CD8-positive, alpha-beta memory T cell (primary cell): ENCODE measurements at regions of chr11 and their contacts with region 1.

Region 1: DNA sequence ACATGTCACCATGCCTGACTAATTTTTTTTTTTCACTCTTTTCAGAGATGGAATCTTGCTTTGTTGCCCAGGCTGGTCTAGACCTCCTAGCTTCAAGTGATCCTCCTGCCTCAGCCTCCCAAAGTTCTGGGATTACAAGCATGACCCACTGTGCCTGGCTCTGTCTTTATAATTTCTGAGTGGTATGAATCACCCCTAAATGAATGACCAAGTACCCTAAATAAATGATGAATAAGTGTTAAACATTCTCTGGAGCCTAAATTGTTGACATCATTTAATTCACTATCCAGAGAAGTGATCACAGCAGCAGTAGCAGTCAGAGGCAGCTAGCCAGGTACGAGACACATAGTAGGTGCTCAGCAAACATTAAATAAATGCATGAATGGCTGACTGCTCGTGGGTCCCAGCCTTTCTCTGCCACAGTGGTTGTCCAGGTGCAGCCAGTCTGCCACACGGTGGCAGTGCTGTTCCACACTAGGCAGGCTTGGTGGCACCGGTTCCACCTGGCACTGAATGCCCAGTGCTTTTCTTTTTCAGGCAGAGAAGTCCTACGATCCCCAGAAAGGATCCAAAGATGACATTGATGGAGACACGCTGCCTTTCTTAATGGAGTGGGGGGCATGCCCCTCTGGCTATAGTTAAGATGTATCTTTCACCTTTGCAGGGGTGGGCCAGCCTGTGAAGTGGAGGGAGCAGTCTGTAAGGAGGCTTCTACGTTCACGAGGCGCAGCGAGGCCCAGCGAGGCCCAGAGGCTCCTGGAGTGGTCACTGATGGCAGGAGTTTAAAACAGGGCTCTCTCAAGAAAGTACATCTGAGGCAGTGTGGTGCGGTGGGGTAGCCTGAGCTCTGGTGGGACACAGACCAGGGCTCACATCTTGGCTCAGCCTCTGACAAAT is 8.7 kb upstream of the TTC12 start:
- DNase-seq: peak; percentile 44 to 80 (median 51)
- H3K4me3 ChIP-seq: no peak overlapping the region
- H3K4me3 Mint-ChIP-seq: no peak overlapping the region
- H3K27ac ChIP-seq: no peak overlapping the region
- H3K27ac Mint-ChIP-seq: peak overlapping the region in 1 of 8 donors; percentile 19
- H3K4me1 ChIP-seq: no peaks in the 10 kb centered on the region
- H3K4me1 Mint-ChIP-seq: peaks cover 0 to 4% (median 0%) of the 10 kb centered on the region in 3 donors
- H3K27me3 ChIP-seq: no peaks in the 10 kb centered on the region
- H3K27me3 Mint-ChIP-seq: peaks cover 1 to 4% of the 10 kb centered on the region in 2 donors

Region 2: DNA sequence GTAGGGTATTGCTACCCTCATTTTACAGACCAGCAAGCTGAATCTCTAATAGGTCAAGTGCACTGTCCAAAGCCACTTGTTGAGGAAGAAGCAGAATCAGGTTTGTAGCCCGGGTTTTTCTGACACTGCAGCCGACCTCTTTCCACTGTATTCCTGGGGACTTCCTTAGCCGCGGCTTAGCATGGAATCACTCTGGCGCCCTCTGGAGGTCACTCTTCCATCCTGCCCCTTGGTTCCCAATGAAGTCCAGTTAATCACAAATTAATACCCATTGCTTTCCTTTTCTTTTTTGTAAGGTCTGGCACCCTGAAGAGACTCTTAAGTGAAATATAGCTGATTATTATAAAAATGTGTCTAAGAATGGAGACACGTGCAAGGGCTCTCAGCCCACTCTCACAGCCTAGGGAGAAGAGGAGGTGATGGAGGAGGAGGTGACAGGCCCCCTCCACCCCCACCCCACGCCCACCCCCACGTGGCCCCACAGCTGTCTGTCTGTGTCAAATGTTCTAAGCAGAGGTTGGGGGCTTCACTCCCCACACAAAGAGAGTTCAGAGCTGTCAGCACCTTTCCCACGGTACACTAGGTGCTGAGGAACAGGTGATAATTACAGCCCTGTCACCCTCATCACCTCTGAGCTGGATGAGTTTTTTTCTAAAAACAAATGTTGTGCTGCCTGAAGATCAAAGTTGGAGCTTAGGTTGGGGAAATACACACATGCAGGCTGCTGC is 227.2 kb after region 1 on chr11:
- CTCF ChIA-PET with region 1: interaction called, 23 read pairs
- POLR2A ChIA-PET with region 1: no interaction called
- DNase-seq: peak; percentile 16 to 64 (median 24)
- H3K4me3 ChIP-seq: no peak overlapping the region
- H3K4me3 Mint-ChIP-seq: no peak overlapping the region
- H3K27ac ChIP-seq: no peak overlapping the region
- H3K27ac Mint-ChIP-seq: no peak overlapping the region
- H3K4me1 ChIP-seq: no peaks in the 10 kb centered on the region
- H3K4me1 Mint-ChIP-seq: no peaks in the 10 kb centered on the region
- H3K27me3 ChIP-seq: no peaks in the 10 kb centered on the region
- H3K27me3 Mint-ChIP-seq: peaks cover 9 to 44% of the 10 kb centered on the region in 2 donors